AG04450 (cell line): ENCODE measurements at regions of chr11 and their contacts with region 1.

Region 1: DNA sequence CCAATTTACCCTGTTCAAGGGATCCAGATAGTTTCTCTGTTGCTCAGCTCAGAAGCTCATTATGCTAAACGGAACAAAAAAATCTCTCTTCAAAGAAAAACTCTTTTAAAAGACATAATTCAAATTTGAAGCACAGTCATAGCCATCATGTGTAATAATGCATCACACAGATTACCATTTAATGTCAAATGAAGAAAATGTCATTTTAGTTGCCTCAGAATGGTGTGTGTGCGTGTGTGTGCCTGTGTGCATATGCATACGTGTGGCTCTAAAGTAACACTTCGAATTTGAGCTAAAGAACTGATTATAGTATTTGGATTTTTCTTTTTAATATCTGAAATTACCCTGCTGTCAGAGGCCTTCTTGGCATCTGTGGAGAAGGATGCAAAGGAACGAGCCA is 9.9 kb downstream of the TTC12 start:
- DNase-seq: no peak
- H3K4me3 ChIP-seq: no peak overlapping the region
- H3K27ac ChIP-seq: no peak overlapping the region
- H3K27me3 ChIP-seq: no peaks in the 10 kb centered on the region
- CTCF ChIP-seq: no peak

Region 2: DNA sequence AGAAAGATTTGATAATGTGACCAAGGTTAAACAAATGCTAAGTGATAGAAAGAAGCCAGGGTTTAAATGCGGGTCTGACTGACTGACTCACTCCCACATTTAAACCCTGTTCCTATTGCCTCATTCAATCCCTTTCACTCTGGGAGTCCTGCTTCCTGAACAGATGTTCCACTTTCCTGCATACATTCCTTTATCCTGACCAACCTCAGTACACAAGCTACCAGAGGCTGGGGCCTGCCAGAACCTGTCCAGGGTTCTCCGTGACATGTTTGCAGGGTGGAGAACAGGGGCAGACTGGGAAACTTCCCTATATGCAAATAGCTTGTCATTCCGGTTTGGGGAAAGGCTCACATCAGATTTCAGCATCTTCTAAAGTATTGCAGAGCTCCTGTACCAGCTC is 60.3 kb after region 1 on chr11:
- CTCF ChIA-PET with region 1: no interaction called
- POLR2A ChIA-PET with region 1: interaction called, 18 read pairs
- DNase-seq: peak; percentile 86
- H3K4me3 ChIP-seq: no peak overlapping the region
- H3K27ac ChIP-seq: peak overlapping the region; percentile 52
- H3K27me3 ChIP-seq: peaks cover 38% of the 10 kb centered on the region
- CTCF ChIP-seq: no peak

Region 3: GRCh38 chr11:113477321-113477720 is 153.1 kb after region 1 on chr11:
- CTCF ChIA-PET with region 1: no interaction called
- POLR2A ChIA-PET with region 1: no interaction called
- DNase-seq: no peak
- H3K4me3 ChIP-seq: no peak overlapping the region
- H3K27ac ChIP-seq: no peak overlapping the region
- H3K27me3 ChIP-seq: peaks cover 22% of the 10 kb centered on the region
- CTCF ChIP-seq: no peak